Tibial artery (tissue), 4 donors: ENCODE measurements at regions of chr4 and their contacts with region 1.

Region 1: GRCh38 chr4:173111031-173111430 is 57.6 kb upstream of the GALNT7 start:
- DNase-seq: no peak
- H3K4me3 ChIP-seq: no peak overlapping the region
- H3K27ac ChIP-seq: no peak overlapping the region
- H3K4me1 ChIP-seq: no peaks in the 10 kb centered on the region
- H3K27me3 ChIP-seq: no peaks in the 10 kb centered on the region
- CTCF ChIP-seq: no peak

Region 2: GRCh38 chr4:172412851-172413580 is 698.0 kb before region 1 on chr4:
- intact Hi-C with region 1: no loop called
- DNase-seq: no peak
- H3K4me3 ChIP-seq: no peak overlapping the region
- H3K27ac ChIP-seq: no peak overlapping the region
- H3K4me1 ChIP-seq: no peaks in the 10 kb centered on the region
- H3K27me3 ChIP-seq: no peaks in the 10 kb centered on the region
- CTCF ChIP-seq: no peak

Region 3: DNA sequence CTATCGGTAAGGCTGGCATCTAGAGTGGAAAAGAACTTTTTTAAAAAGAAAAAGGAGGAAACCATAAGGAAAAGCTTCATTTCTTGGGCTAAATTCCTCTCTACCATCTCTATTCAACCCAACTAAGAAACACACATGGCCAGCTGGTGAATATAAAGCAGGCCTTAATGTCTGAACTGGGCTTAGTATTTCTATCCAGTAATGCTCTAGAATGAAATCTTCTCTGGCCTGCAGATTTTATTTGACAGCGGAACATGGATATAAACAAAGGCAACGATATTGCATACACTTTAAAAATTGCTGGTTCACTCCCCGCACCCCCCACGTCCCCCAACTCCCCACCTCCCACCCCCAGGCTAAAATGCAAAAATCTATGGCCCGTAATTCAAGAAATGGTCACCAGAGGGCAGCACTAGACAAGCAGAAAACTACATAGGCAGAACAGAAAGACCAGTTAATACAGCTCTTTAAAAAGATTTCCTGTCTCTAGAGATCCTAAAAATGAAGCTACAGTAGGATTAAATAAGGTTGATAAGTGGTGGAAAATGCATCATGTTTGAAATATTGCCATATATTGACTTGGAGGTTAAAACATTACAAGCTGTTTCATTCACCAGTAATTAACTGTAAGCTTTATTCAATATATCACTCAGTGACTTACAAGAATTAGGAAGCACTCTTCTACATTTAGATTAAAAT is 97.7 kb before region 1 on chr4:
- intact Hi-C with region 1: no loop called
- DNase-seq: peak in 1 of 2 donors; percentile 31
- H3K4me3 ChIP-seq: no peak overlapping the region
- H3K27ac ChIP-seq: no peak overlapping the region
- H3K4me1 ChIP-seq: peaks cover 0 to 13% (median 0%) of the 10 kb centered on the region in 4 donors
- H3K27me3 ChIP-seq: no peaks in the 10 kb centered on the region
- CTCF ChIP-seq: peak; percentile 53 to 77

Region 4: DNA sequence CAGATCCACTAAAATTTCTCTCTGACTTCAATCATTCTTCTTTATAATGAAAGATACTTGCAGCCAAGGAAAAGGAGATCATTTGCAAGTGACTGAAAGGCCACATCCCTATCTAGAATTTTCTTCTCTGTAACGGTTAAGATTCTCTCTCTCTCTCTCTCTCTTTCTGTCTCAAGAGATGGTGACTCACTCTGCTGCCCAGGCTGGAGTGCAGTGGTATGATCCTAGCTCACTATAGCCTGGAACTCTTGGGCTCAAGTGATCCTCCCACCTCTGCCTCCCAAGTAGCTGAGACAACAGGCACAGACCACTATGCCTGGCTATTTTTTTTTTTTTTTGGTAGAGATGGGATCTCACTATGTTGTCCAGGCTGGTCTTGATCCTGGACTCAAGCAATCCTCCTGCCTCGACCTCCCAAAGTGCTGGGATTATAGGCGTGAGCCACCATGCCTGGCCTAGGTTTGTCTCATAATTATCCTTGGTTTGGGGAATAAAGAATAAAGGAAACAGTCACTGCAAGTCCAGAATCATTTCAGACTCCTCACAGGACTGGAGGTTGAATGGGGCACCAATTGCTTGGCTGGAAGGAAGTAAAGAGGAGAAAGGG is 24.3 kb after region 1 on chr4:
- intact Hi-C with region 1: loop called (anchors 1 kb)
- DNase-seq: no peak
- H3K4me3 ChIP-seq: no peak overlapping the region
- H3K27ac ChIP-seq: no peak overlapping the region
- H3K4me1 ChIP-seq: no peaks in the 10 kb centered on the region
- H3K27me3 ChIP-seq: no peaks in the 10 kb centered on the region
- CTCF ChIP-seq: no peak